ENCODE measurements at regions of chr2 and their contacts with region 1.

Region 1: GRCh38 chr2:69914170-69914960 is 544 bp upstream of the MXD1 start:
- DNase-seq: peak; percentile 100
- H3K4me3 ChIP-seq: peak overlapping the region; percentile 92
- H3K27ac ChIP-seq: peak overlapping the region; percentile 96
- H3K4me1 ChIP-seq: peaks cover 58% of the 10 kb centered on the region
- H3K27me3 ChIP-seq: no peaks in the 10 kb centered on the region
- CTCF ChIP-seq: no peak

Region 2: DNA sequence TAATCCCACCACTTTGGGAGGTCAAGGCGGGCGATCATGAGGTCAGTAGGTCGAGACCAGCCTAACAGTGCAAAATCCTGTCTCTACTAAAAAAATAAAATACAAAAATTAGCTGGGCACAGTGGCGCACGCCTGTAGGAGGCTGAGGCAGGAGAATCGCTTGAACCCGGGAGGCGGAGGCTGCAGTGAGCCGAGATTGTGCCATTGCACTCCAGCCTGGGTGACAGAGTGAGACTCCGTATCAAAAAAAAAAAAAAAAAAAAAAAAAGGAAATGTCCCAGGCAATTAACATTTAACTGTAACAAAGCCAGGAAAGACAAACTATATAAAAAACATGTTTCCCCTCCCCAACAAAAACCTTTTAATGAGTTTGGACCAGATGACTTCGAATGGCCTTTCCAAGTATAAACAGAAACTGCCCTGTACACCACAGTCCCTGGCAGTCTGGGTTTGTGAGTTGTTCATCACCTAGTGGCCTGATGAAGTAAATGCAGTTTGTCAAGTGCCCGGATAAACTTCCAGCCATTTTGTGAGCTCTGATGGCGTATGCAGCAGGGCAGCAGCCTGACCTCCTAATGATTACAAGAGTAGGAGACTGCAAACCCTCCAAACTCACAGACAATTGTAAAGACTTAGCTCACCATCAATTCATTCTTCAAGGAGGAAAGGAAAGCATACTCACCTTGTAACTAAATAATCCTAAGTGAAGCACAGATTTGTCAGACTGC is 156.3 kb after region 1 on chr2:
- intact Hi-C with region 1: loop called (anchors 5 kb)
- DNase-seq: peak; percentile 31
- H3K4me3 ChIP-seq: peak overlapping the region; percentile 28
- H3K27ac ChIP-seq: peak overlapping the region; percentile 77
- H3K4me1 ChIP-seq: peaks cover 24% of the 10 kb centered on the region
- H3K27me3 ChIP-seq: no peaks in the 10 kb centered on the region
- CTCF ChIP-seq: peak; percentile 86

Region 3: GRCh38 chr2:70142590-70143313 is 228.4 kb after region 1 on chr2:
- intact Hi-C with region 1: loop called (anchors 5 kb)
- DNase-seq: peak; percentile 99
- H3K4me3 ChIP-seq: peak overlapping the region; percentile 77
- H3K27ac ChIP-seq: peak overlapping the region; percentile 99
- H3K4me1 ChIP-seq: peaks cover 27% of the 10 kb centered on the region
- H3K27me3 ChIP-seq: no peaks in the 10 kb centered on the region
- CTCF ChIP-seq: peak; percentile 96